ENCODE measurements at regions of chr6 and their contacts with region 1.

Region 1: DNA sequence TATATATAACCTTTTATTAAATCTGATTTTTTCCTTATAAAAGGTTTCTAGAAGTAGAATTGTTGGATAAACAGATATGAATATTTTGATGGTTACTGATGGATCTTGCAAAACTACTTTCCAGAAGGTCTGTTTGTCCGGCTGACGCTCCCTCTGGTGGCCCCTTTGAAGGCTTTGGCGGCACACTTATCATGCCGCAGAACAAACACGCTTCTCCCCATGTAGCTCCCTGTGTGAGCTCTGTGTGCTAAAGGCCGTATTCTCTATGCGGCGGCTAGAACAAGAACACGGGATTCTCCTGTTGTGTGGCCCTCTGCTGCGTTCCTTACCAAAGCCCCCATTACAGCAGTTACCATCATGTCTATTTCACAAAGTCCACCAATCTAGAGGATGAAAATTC is 30.0 kb downstream of the PPP1R3G start:
- DNase-seq: no peak
- ATAC-seq: peak in 1 of 2 donors; percentile 47
- H3K4me3 ChIP-seq: no peak overlapping the region
- H3K27ac ChIP-seq: no peak overlapping the region
- H3K4me1 ChIP-seq: peaks cover 3% of the 10 kb centered on the region
- H3K27me3 ChIP-seq: no peaks in the 10 kb centered on the region

Region 2: DNA sequence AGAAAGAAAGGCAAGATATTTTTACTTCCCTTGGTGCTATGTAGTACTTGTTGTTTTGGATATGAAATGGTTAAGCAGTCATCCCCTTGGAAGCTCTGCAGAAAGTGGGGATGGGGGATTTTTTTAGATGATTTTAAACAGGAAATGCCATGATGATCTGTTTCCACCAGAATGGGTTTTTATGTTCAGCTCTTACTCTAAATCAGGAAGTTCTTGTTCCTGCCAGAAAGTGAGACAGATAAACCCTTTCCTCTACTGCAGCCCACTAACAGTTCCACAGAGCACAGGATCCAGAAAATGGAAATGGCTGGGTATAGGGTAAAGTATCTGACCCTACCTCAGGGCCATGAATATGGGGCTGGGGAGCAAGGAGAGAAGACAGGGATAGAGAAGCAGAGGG is 62.1 kb before region 1 on chr6:
- intact Hi-C with region 1: loop called in 1 of 4 experiments (anchors 10 kb)
- DNase-seq: no peak
- ATAC-seq: no peak
- H3K4me3 ChIP-seq: no peak overlapping the region
- H3K27ac ChIP-seq: no peak overlapping the region
- H3K4me1 ChIP-seq: peaks cover 1% of the 10 kb centered on the region
- H3K27me3 ChIP-seq: no peaks in the 10 kb centered on the region

Region 3: GRCh38 chr6:5167501-5167900 is 52.3 kb after region 1 on chr6:
- intact Hi-C with region 1: no loop called
- DNase-seq: no peak
- ATAC-seq: no peak
- H3K4me3 ChIP-seq: no peak overlapping the region
- H3K27ac ChIP-seq: no peak overlapping the region
- H3K4me1 ChIP-seq: no peaks in the 10 kb centered on the region
- H3K27me3 ChIP-seq: no peaks in the 10 kb centered on the region

Region 4: DNA sequence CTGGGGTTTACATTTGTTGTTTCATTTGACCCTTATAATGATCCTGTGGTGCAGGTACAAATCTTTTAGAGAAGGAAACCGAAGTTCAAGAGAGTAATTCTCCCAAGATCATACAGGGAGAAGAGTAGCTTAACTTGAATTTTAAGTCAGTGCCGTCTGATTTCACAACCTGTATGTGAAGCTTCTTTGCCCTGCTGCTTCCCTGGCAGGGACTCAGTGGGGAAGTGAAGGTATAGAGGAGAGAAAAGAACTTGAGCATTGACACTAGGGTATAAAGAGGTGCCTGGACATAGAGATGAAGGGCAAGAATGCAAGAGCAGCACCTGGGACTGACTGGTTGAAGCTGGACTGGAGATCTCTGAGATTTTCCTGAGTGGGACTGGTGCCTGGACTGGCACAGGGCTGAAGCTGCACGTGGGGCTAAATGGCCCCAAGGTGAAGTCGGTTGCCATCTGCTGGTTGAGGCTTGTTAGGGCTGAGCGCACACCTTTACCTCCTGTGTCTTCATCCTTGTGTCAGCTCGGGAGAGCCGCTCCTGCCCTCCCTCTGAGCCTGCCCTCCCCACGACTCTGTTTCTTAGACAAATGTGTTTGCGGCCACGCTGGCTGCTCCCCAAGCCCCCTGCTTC is 187.9 kb after region 1 on chr6:
- intact Hi-C with region 1: no loop called
- DNase-seq: peak in 2 of 3 donors; percentile 53 to 57
- ATAC-seq: peak; percentile 77 to 79
- H3K4me3 ChIP-seq: no peak overlapping the region
- H3K27ac ChIP-seq: no peak overlapping the region
- H3K4me1 ChIP-seq: peaks cover 3% of the 10 kb centered on the region
- H3K27me3 ChIP-seq: no peaks in the 10 kb centered on the region

Region 5: GRCh38 chr6:5398530-5398929 is 283.4 kb after region 1 on chr6:
- intact Hi-C with region 1: no loop called
- DNase-seq: no peak
- ATAC-seq: no peak
- H3K4me3 ChIP-seq: no peak overlapping the region
- H3K27ac ChIP-seq: no peak overlapping the region
- H3K4me1 ChIP-seq: no peaks in the 10 kb centered on the region
- H3K27me3 ChIP-seq: no peaks in the 10 kb centered on the region

Measured in right cardiac atrium (tissue), 5 donors.